Breast epithelium (tissue), 4 donors: ENCODE measurements at regions of chr16 and their contacts with region 1.

Region 1: DNA sequence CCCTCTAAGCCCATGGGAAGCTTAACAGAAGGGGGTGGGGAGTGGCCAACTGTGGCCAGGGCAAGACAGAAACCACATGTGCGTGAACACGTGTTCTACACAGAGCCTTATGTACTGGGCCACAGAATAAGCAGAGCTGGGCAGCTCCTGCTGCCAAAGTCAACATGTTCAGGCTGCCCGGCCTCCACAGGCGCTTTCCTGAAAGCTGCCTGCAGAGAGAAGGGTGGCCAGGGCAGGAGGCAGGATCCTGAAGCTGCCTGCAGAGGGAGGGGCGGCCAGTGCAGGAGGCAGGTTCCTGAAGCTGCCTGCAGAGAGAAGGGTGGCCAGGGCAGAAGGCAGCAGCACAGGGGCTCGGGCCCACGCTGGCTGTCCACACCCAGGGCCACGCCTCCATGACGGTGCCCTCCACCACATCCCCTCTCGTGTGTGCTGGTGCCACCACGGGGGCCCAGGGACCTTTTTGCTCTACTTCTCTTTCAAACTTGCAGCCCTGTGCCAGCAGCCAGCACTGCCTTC is 79.5 kb downstream of the ANKRD11 start:
- DNase-seq: peak; percentile 50 to 76
- H3K4me3 ChIP-seq: no peak overlapping the region
- H3K27ac ChIP-seq: peak overlapping the region in 1 of 2 donors; percentile 14
- H3K4me1 ChIP-seq: peaks cover 3 to 18% of the 10 kb centered on the region in 2 donors
- H3K27me3 ChIP-seq: no peaks in the 10 kb centered on the region
- CTCF ChIP-seq: no peak
- POLR2A ChIP-seq: no peak

Region 2: GRCh38 chr16:88706288-88706964 is 704.4 kb before region 1 on chr16 and contains the starts of genes CTU2 and RNF166:
- intact Hi-C with region 1: loop called (anchors 10 kb)
- DNase-seq: peak; percentile 84 to 87
- H3K4me3 ChIP-seq: peak within 1 kb of the TSS; percentile 91 to 99 (median 99)
- H3K27ac ChIP-seq: peak within 1 kb of the TSS; percentile 86 to 87
- H3K4me1 ChIP-seq: peaks cover 13 to 14% of the 10 kb centered on the region in 2 donors
- H3K27me3 ChIP-seq: no peaks in the 10 kb centered on the region
- CTCF ChIP-seq: no peak
- POLR2A ChIP-seq: no peak
- total RNA-seq, gene CTU2: 7.3 to 8.2 (median 7.8) TPM
- total RNA-seq, gene RNF166: 19.2 to 22.0 (median 21.9) TPM

Region 3: GRCh38 chr16:89343501-89344457 is 67.1 kb before region 1 on chr16:
- intact Hi-C with region 1: no loop called
- DNase-seq: no peak
- H3K4me3 ChIP-seq: peak overlapping the region in 1 of 3 donors; percentile 8
- H3K27ac ChIP-seq: no peak overlapping the region
- H3K4me1 ChIP-seq: peaks cover 3 to 7% of the 10 kb centered on the region in 2 donors
- H3K27me3 ChIP-seq: no peaks in the 10 kb centered on the region
- CTCF ChIP-seq: no peak
- POLR2A ChIP-seq: no peak

Region 4: GRCh38 chr16:89545831-89546574 is 135.2 kb after region 1 on chr16:
- intact Hi-C with region 1: no loop called
- DNase-seq: no peak
- H3K4me3 ChIP-seq: no peak overlapping the region
- H3K27ac ChIP-seq: no peak overlapping the region
- H3K4me1 ChIP-seq: no peaks in the 10 kb centered on the region
- H3K27me3 ChIP-seq: no peaks in the 10 kb centered on the region
- CTCF ChIP-seq: no peak
- POLR2A ChIP-seq: no peak